Activated CD4-positive, alpha-beta T cell treated with anti-CD3 and anti-CD28 coated beads, Interleukin-2, amount 10 ng/mL, durations not matched to agents 7 days and 5 days (primary cell): ENCODE measurements at regions of chr1 and their contacts with region 1.

Region 1: GRCh38 chr1:202716654-202717053 is 6.4 kb upstream of the SYT2 start:
- DNase-seq: no peak
- H3K4me3 Mint-ChIP-seq: no peak overlapping the region
- H3K27ac Mint-ChIP-seq: no peak overlapping the region
- H3K4me1 Mint-ChIP-seq: peaks cover 3% of the 10 kb centered on the region
- H3K27me3 Mint-ChIP-seq: peaks cover 41% of the 10 kb centered on the region

Region 2: GRCh38 chr1:202684716-202685115 is 31.9 kb before region 1 on chr1:
- CTCF ChIA-PET with region 1: no interaction called
- POLR2A ChIA-PET with region 1: no interaction called
- DNase-seq: no peak
- H3K4me3 Mint-ChIP-seq: no peak overlapping the region
- H3K27ac Mint-ChIP-seq: no peak overlapping the region
- H3K4me1 Mint-ChIP-seq: no peaks in the 10 kb centered on the region
- H3K27me3 Mint-ChIP-seq: peaks cover 17% of the 10 kb centered on the region

Region 3: GRCh38 chr1:202728951-202729350 is 12.3 kb after region 1 on chr1:
- CTCF ChIA-PET with region 1: interaction called, 10 read pairs
- POLR2A ChIA-PET with region 1: no interaction called
- DNase-seq: no peak
- H3K4me3 Mint-ChIP-seq: no peak overlapping the region
- H3K27ac Mint-ChIP-seq: no peak overlapping the region
- H3K4me1 Mint-ChIP-seq: no peaks in the 10 kb centered on the region
- H3K27me3 Mint-ChIP-seq: no peaks in the 10 kb centered on the region